Activated B cell treated with CpG ODN at 0.5 μM for 24 hours (primary cell): ENCODE measurements at regions of chr15 and their contacts with region 1.

Region 1: GRCh38 chr15:94412979-94413746 is 181.8 kb downstream of the MCTP2 start:
- DNase-seq: no peak
- ATAC-seq: peak; percentile 65
- H3K4me3 Mint-ChIP-seq: no peak overlapping the region
- H3K27ac Mint-ChIP-seq: no peak overlapping the region
- H3K4me1 Mint-ChIP-seq: peaks cover 9% of the 10 kb centered on the region
- H3K27me3 Mint-ChIP-seq: no peaks in the 10 kb centered on the region
- CTCF ChIP-seq: no peak

Region 2: DNA sequence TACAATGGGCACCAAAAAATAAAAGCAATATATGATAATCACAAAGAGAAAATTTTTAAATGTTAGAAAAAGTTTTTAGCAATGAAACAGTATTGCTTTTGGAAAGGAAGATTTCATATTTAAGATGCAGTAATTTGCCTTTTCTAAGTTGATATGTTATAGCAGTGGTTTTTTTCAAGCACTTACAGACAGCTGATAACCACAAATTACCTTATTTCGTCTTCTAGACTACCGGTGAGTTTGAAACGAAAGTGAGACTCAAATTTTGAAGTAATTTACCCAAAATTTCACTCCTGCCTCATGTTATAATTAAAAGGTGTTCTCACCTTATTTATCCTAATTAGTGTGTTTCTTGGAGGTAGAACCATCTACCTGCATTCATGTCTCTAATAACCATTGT is 26.0 kb after region 1 on chr15:
- CTCF ChIA-PET with region 1: no interaction called
- POLR2A ChIA-PET with region 1: no interaction called
- intact Hi-C with region 1: no loop called
- DNase-seq: no peak
- ATAC-seq: no peak
- H3K4me3 Mint-ChIP-seq: no peak overlapping the region
- H3K27ac Mint-ChIP-seq: no peak overlapping the region
- H3K4me1 Mint-ChIP-seq: no peaks in the 10 kb centered on the region
- H3K27me3 Mint-ChIP-seq: no peaks in the 10 kb centered on the region
- CTCF ChIP-seq: no peak

Region 3: GRCh38 chr15:94670438-94671034 is 257.4 kb after region 1 on chr15:
- CTCF ChIA-PET with region 1: interaction called, 10 read pairs
- POLR2A ChIA-PET with region 1: no interaction called
- intact Hi-C with region 1: no loop called
- DNase-seq: no peak
- ATAC-seq: no peak
- H3K4me3 Mint-ChIP-seq: no peak overlapping the region
- H3K27ac Mint-ChIP-seq: no peak overlapping the region
- H3K4me1 Mint-ChIP-seq: no peaks in the 10 kb centered on the region
- H3K27me3 Mint-ChIP-seq: no peaks in the 10 kb centered on the region
- CTCF ChIP-seq: no peak